Endothelial cell of umbilical vein (primary cell): ENCODE measurements at regions of chr17 and their contacts with region 1.

Region 1: GRCh38 chr17:4565209-4566141 is 5.1 kb upstream of the GGT6 start:
- DNase-seq: peak; percentile 70
- H3K4me3 ChIP-seq: no peak overlapping the region
- H3K27ac ChIP-seq: no peak overlapping the region
- H3K4me1 ChIP-seq: no peaks in the 10 kb centered on the region
- H3K27me3 ChIP-seq: peaks cover 0 to 1% of the 10 kb centered on the region in 2 experiments
- CTCF ChIP-seq: peak; percentile 82 to 84
- POLR2A ChIP-seq: no peak

Region 2: DNA sequence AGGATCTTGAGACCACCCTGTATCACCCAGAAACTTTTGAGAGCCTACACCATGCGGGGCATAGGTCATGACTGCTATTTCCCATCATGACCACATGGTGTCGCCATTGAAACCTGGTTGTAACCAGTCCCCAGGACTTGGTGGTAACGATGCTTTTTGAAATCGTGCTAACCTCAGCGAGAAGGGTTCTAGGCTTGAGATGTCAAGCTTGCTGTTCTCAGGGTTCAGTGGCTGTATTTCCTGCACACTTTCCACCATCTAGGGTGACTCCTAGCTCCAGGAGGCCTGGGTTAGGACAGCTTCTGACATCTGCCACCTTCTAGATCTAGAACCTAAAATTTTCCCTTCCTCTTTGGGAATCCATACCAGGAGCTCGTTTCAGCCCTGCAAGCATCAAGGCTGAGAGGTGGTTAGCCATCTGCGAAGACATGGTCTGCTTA is 144.8 kb before region 1 on chr17:
- CTCF ChIA-PET with region 1: interaction called, 24 read pairs
- POLR2A ChIA-PET with region 1: no interaction called
- dilution Hi-C with region 1: no loop called
- intact Hi-C with region 1: loop called (anchors 2 kb)
- DNase-seq: peak; percentile 70
- H3K4me3 ChIP-seq: no peak overlapping the region
- H3K27ac ChIP-seq: no peak overlapping the region
- H3K4me1 ChIP-seq: no peaks in the 10 kb centered on the region
- H3K27me3 ChIP-seq: no peaks in the 10 kb centered on the region
- CTCF ChIP-seq: peak; percentile 81 to 82
- POLR2A ChIP-seq: no peak

Region 3: GRCh38 chr17:4554997-4555799 is 10.3 kb before region 1 on chr17 and contains the start of gene MYBBP1A:
- CTCF ChIA-PET with region 1: interaction called, 31 read pairs
- POLR2A ChIA-PET with region 1: no interaction called
- dilution Hi-C with region 1: no loop called
- intact Hi-C with region 1: no loop called
- DNase-seq: peak; percentile 94
- H3K4me3 ChIP-seq: peak within 1 kb of the TSS; percentile 77 to 84 (median 78)
- H3K27ac ChIP-seq: peak within 1 kb of the TSS; percentile 57
- H3K4me1 ChIP-seq: peaks cover 17% of the 10 kb centered on the region
- H3K27me3 ChIP-seq: no peaks in the 10 kb centered on the region
- CTCF ChIP-seq: peak in 1 of 2 donors; percentile 22
- POLR2A ChIP-seq: peak; percentile 86
- total RNA-seq, gene MYBBP1A: 78.1 and 79.2 TPM in 2 replicates

Region 4: DNA sequence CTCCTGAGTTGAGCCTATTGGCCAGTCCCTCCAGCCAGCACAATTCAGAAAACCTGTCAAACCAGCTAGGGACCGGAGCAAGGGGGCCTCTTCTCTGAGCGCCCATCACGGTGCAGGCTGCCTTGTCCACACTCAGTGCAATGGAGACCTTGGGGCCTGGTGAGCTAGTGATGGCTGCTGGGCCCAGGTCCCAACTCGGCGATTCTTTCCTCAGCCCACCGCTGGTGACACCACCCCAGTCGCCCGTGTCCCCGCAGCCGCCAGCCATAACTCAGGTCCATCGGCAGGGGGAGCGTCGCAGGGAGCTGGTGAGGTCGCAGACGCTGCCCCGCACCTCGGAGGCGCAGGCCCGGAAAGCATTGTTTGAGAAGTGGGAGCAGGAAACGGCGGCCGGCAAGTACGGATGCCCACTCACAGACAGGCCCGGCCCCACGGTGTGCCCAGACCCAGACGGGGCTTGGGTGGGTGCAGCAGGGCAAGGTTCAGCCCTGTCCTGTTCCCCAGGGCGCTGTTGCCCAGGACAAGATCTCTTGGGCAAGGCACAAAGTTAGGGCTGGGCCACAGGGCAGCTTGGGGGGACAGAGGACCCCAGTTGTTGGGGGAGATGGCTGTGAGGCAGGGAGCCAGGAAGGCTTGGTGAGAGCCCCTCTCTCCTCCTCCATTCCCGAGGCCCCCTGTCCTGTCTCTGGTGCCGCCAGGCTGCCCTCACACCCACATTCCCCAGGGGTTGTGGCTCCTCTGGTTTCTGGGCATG is 29.6 kb after region 1 on chr17:
- CTCF ChIA-PET with region 1: interaction called, 14 read pairs
- POLR2A ChIA-PET with region 1: no interaction called
- dilution Hi-C with region 1: no loop called
- intact Hi-C with region 1: no loop called
- DNase-seq: no peak
- H3K4me3 ChIP-seq: no peak overlapping the region
- H3K27ac ChIP-seq: no peak overlapping the region
- H3K4me1 ChIP-seq: no peaks in the 10 kb centered on the region
- H3K27me3 ChIP-seq: no peaks in the 10 kb centered on the region
- CTCF ChIP-seq: peak; percentile 14 to 15
- POLR2A ChIP-seq: no peak

Region 5: DNA sequence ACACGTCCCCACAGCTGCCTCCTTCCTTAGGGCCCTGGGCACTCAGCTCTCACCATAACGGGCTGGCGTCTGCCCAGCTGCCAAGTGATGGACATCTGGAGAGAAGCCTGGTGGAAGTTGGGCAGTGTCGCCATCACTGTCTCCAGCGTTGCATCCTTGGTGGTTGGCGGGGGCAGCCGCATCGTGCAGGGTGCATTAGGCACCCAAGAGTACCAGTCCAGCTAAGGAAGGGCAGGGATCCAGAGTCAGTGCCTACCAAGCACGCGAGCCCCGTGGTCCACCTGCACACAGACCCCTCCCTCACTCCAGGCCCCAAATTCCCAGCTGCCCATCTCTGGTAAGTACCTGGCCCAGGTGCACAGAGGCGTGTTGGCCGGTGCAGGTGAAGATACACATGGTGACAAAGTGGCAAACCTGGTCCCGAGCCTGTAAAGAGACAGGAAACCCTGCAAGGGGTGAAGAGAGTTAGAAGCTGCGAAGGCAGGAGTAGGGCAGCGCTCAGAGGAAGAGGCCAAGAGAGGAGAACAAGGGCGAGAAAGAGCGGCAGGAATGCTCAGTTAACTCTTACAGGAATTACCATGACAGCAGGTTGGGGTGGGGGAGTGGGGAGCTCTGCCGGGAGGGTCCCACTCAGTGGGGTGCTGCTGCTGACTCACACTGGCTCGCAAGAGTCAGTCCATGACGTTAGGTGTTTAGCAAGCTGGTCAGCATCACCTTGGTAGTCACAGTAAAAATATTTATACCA is 66.5 kb after region 1 on chr17:
- CTCF ChIA-PET with region 1: interaction called, 213 read pairs
- POLR2A ChIA-PET with region 1: no interaction called
- dilution Hi-C with region 1: no loop called
- intact Hi-C with region 1: no loop called
- DNase-seq: no peak
- H3K4me3 ChIP-seq: no peak overlapping the region
- H3K27ac ChIP-seq: no peak overlapping the region
- H3K4me1 ChIP-seq: no peaks in the 10 kb centered on the region
- H3K27me3 ChIP-seq: peaks cover 19 to 25% of the 10 kb centered on the region in 2 experiments
- CTCF ChIP-seq: no peak
- POLR2A ChIP-seq: no peak

Region 6: DNA sequence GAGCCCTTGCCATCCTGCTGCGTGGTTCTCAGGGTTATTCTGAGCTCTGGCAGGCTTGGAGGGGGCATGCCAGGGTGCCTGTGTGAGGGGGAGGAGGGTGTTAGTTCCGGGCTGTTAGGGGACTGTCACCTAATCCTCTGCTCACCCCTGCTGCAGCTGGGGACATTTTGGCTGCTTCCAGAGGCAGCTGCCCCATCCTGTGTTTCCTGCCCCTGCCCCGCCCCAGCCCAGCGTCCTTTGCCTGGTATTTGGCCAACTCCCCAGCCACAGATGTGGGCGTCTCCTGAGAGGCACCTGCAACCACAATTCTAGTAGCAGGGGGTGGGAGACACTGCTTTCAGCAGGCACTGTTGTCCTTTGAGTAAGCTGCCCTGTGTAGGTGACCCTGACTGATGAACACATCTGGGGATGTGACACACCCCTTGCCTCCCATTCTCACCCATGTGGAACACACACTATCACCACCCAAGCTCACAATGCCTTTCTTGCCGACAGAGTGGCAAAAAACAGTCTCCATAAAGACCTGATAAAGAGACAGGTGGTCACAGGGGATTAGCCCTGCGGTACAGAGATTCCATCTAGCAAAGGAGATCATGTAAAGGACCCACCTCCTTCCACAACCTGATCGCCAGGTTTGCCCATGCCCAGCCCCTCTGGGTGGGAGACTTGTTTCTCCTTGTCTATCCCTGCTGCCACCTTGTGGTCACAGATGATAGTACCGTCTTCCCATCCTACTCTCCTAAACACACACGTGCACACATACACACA is 337.8 kb after region 1 on chr17 and contains the start of gene CHRNE:
- CTCF ChIA-PET with region 1: interaction called, 13 read pairs
- POLR2A ChIA-PET with region 1: no interaction called
- dilution Hi-C with region 1: no loop called
- intact Hi-C with region 1: no loop called
- DNase-seq: peak; percentile 76
- H3K4me3 ChIP-seq: no peak within 1 kb of the TSS
- H3K27ac ChIP-seq: no peak within 1 kb of the TSS
- H3K4me1 ChIP-seq: peaks cover 10% of the 10 kb centered on the region
- H3K27me3 ChIP-seq: no peaks in the 10 kb centered on the region
- CTCF ChIP-seq: peak; percentile 63 to 77
- POLR2A ChIP-seq: no peak
- total RNA-seq, gene CHRNE: 0.76 and 0.84 TPM in 2 replicates